HepG2 (cell line): ENCODE measurements at regions of chr2 and their contacts with region 1.

Region 1: GRCh38 chr2:208392300-208393080 is 14.1 kb upstream of the PTH2R start:
- DNase-seq: peak; percentile 25
- ATAC-seq: peak; percentile 68
- H3K4me3 ChIP-seq: no peak overlapping the region
- H3K27ac ChIP-seq: no peak overlapping the region
- H3K4me1 ChIP-seq: no peaks in the 10 kb centered on the region
- H3K27me3 ChIP-seq: peaks cover 0 to 13% of the 10 kb centered on the region in 2 experiments; a peak in 1 of 5 replicates
- CTCF ChIP-seq: peak; percentile 38; the same call in 1 of the 2 replicates
- EP300 ChIP-seq: no peak
- POLR2A ChIP-seq: no peak
- RAD21 ChIP-seq: no peak

Region 2: GRCh38 chr2:208466151-208466919 is 73.8 kb after region 1 on chr2:
- CTCF ChIA-PET with region 1: no interaction called
- POLR2A ChIA-PET with region 1: no interaction called
- in situ Hi-C with region 1: no loop called
- intact Hi-C with region 1: loop called (anchors 2 kb)
- DNase-seq: peak; percentile 61
- ATAC-seq: peak; percentile 95
- H3K4me3 ChIP-seq: no peak overlapping the region
- H3K27ac ChIP-seq: no peak overlapping the region
- H3K4me1 ChIP-seq: no peaks in the 10 kb centered on the region
- H3K27me3 ChIP-seq: no peaks in the 10 kb centered on the region
- CTCF ChIP-seq: peak; percentile 86
- EP300 ChIP-seq: no peak
- POLR2A ChIP-seq: no peak
- RAD21 ChIP-seq: peak; percentile 76

Region 3: DNA sequence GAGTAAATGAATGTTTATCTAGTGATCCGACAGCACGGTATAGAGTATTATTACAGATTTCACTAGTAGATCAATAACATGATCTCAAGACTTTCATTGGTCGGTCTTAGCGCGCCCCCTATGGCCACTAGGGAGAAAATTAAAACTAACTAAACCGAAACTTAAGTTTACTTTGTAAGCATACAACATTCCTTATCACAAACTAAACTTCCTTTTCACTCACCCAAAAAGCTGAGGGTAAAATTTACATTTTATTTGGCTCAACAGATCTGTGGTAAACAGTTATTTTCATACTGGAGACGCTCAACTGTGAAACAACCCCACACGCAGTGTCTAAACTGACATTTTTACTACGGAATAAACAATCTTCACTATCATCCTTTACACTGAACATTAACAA is 815.7 kb after region 1 on chr2:
- CTCF ChIA-PET with region 1: no interaction called
- POLR2A ChIA-PET with region 1: no interaction called
- in situ Hi-C with region 1: no loop called
- intact Hi-C with region 1: loop called (anchors 1 kb)
- DNase-seq: peak; percentile 32
- ATAC-seq: peak; percentile 82
- H3K4me3 ChIP-seq: peak overlapping the region; percentile 25 to 54 (median 53); a peak in 5 of 6 replicates
- H3K27ac ChIP-seq: no peak overlapping the region
- H3K4me1 ChIP-seq: no peaks in the 10 kb centered on the region
- H3K27me3 ChIP-seq: no peaks in the 10 kb centered on the region
- CTCF ChIP-seq: peak; percentile 78
- EP300 ChIP-seq: no peak
- POLR2A ChIP-seq: no peak
- RAD21 ChIP-seq: peak; percentile 72

Region 4: DNA sequence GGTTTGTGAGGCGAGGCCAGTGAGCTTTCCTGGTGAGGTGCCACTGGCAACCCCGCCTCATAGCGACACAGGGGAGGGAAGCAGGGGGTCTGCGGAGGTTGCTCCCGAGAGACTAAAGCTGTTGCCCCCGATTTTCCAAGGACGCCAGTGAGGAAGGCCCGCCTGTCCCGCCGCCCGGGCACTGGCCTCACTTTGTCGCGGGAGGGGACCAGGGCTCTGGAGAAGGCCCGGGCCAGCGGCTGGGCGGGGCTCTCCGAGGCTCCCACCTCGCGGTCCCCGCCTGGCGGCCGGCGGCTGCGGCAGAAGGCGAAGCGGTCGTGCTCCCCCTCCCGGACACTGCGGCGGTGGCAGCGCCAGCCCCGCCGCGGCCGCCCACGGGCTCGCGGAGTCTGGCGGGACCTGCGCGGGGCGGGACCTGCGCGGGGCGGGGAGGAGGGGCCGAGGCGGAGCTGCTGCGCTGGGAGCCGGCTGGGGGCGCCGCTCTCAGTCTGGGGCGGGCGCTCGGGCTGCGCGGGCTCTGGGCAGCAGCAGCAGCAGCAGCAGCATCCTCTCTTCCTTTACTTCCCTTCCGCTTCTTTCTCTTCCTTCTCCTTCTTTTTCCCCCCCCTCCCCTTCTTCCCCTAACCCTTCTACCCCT is 1031.2 kb after region 1 on chr2 and contains the start of gene MAP2:
- CTCF ChIA-PET with region 1: interaction called, 11 read pairs
- POLR2A ChIA-PET with region 1: no interaction called
- in situ Hi-C with region 1: no loop called
- intact Hi-C with region 1: loop called (anchors 1 kb)
- DNase-seq: peak; percentile 61
- ATAC-seq: peak; percentile 99
- H3K4me3 ChIP-seq: peak within 1 kb of the TSS; percentile 29 to 63 (median 41); a peak in 5 of 6 replicates
- H3K27ac ChIP-seq: no peak within 1 kb of the TSS
- H3K4me1 ChIP-seq: peaks cover 11% of the 10 kb centered on the region
- H3K27me3 ChIP-seq: peaks cover 0 to 5% of the 10 kb centered on the region in 2 experiments; a peak in 2 of 5 replicates
- CTCF ChIP-seq: peak; percentile 81
- EP300 ChIP-seq: peak in 1 of 2 experiments; percentile 22; a peak in 1 of 4 replicates
- POLR2A ChIP-seq: no peak
- RAD21 ChIP-seq: peak; percentile 94
- total RNA-seq, gene MAP2: not detected in 2 replicates

Region 5: DNA sequence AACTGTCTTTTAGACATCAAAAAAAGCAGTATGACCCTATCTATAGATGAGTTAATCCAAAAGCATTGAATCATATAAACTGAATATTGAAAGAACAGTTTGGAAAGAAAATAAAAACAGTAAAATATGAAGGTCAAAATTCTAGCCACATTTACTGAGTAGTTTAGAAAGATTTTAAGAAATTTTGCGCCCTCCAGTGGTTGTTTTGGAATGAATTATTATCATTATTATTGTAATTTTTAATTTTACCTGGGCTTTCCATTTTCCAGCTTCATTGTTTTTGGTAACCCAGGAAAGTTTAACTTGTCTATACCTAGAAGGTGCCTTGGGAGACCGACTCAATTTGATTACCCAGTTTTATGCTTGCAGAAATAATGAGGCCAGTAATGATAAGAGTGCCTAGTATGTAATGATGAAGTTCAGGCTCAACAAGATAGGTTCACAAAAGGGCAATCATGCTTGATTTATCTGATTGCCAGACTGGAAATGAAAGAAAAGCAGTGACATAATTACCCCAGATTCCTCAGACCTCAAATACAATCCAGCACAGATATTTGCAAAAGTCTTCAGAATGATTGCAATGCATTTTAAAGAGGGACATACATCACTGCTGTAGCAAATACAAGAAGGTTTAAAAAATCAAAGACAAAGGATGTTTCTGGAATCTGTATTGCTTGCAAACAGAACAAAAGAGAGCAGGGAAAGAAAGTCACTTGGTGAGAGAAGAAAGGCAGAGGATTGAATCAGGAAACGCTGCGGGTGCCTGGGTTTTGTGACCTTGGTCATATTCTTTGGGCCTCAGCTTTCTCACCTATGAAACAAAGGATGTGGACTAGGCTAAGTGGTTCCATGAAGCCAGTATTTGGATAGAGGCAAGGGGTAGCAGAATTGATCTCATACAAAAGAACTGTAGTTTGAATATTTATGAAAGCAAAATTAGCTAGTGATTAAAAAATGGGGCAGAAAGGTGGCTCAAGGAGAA is 1185.2 kb after region 1 on chr2:
- CTCF ChIA-PET with region 1: interaction called, 4 read pairs
- POLR2A ChIA-PET with region 1: no interaction called
- in situ Hi-C with region 1: no loop called
- intact Hi-C with region 1: loop called (anchors 1 kb)
- DNase-seq: peak; percentile 10
- ATAC-seq: no peak
- H3K4me3 ChIP-seq: no peak overlapping the region
- H3K27ac ChIP-seq: no peak overlapping the region
- H3K4me1 ChIP-seq: no peaks in the 10 kb centered on the region
- H3K27me3 ChIP-seq: no peaks in the 10 kb centered on the region
- CTCF ChIP-seq: peak; percentile 24; the same call in 1 of the 2 replicates
- EP300 ChIP-seq: no peak
- POLR2A ChIP-seq: no peak
- RAD21 ChIP-seq: no peak

Region 6: GRCh38 chr2:209960676-209961630 is 1568.5 kb after region 1 on chr2:
- CTCF ChIA-PET with region 1: no interaction called
- POLR2A ChIA-PET with region 1: no interaction called
- in situ Hi-C with region 1: no loop called
- intact Hi-C with region 1: loop called (anchors 2 kb)
- DNase-seq: peak; percentile 67
- ATAC-seq: peak; percentile 98
- H3K4me3 ChIP-seq: no peak overlapping the region
- H3K27ac ChIP-seq: no peak overlapping the region
- H3K4me1 ChIP-seq: no peaks in the 10 kb centered on the region
- H3K27me3 ChIP-seq: 0 out of 5 replicates have a peak, but pooled peaks cover 0 to 12% of the 10 kb centered on the region in 2 experiments
- CTCF ChIP-seq: peak; percentile 85
- EP300 ChIP-seq: no peak
- POLR2A ChIP-seq: no peak
- RAD21 ChIP-seq: peak; percentile 45; the same call in 1 of the 2 replicates

Region 7: GRCh38 chr2:210195101-210195852 is 1802.8 kb after region 1 on chr2:
- CTCF ChIA-PET with region 1: no interaction called
- POLR2A ChIA-PET with region 1: no interaction called
- in situ Hi-C with region 1: loop called (anchors 25 kb)
- intact Hi-C with region 1: loop called (anchors 2 kb)
- DNase-seq: peak; percentile 51
- ATAC-seq: peak; percentile 88
- H3K4me3 ChIP-seq: peak overlapping the region; percentile 5 to 44 (median 34); a peak in 4 of 6 replicates
- H3K27ac ChIP-seq: no peak overlapping the region
- H3K4me1 ChIP-seq: peaks cover 7% of the 10 kb centered on the region; the same call in 1 of the 2 replicates
- H3K27me3 ChIP-seq: no peaks in the 10 kb centered on the region
- CTCF ChIP-seq: peak; percentile 77
- EP300 ChIP-seq: no peak
- POLR2A ChIP-seq: no peak
- RAD21 ChIP-seq: peak; percentile 82